Activated CD4-positive, alpha-beta T cell treated with anti-CD3 and anti-CD28 coated beads, Interleukin-2, amount 10 ng/mL, durations not matched to agents 24 days and 14 days (primary cell): ENCODE measurements at regions of chr2 and their contacts with region 1.

Region 1: GRCh38 chr2:62787386-62787785 is 81.9 kb downstream of the EHBP1 start:
- DNase-seq: no peak
- H3K4me3 Mint-ChIP-seq: no peak overlapping the region
- H3K27ac Mint-ChIP-seq: no peak overlapping the region
- H3K4me1 Mint-ChIP-seq: peaks cover 11% of the 10 kb centered on the region
- H3K27me3 Mint-ChIP-seq: no peaks in the 10 kb centered on the region

Region 2: GRCh38 chr2:63050334-63051041 is 263.1 kb after region 1 on chr2 and contains the start of gene OTX1:
- intact Hi-C with region 1: loop called (anchors 5 kb)
- DNase-seq: peak; percentile 83
- H3K4me3 Mint-ChIP-seq: peak within 1 kb of the TSS; percentile 80
- H3K27ac Mint-ChIP-seq: peak within 1 kb of the TSS; percentile 79
- H3K4me1 Mint-ChIP-seq: peaks cover 32% of the 10 kb centered on the region
- H3K27me3 Mint-ChIP-seq: peaks cover 87% of the 10 kb centered on the region
- total RNA-seq, gene OTX1: not detected in 2 replicates

Region 3: DNA sequence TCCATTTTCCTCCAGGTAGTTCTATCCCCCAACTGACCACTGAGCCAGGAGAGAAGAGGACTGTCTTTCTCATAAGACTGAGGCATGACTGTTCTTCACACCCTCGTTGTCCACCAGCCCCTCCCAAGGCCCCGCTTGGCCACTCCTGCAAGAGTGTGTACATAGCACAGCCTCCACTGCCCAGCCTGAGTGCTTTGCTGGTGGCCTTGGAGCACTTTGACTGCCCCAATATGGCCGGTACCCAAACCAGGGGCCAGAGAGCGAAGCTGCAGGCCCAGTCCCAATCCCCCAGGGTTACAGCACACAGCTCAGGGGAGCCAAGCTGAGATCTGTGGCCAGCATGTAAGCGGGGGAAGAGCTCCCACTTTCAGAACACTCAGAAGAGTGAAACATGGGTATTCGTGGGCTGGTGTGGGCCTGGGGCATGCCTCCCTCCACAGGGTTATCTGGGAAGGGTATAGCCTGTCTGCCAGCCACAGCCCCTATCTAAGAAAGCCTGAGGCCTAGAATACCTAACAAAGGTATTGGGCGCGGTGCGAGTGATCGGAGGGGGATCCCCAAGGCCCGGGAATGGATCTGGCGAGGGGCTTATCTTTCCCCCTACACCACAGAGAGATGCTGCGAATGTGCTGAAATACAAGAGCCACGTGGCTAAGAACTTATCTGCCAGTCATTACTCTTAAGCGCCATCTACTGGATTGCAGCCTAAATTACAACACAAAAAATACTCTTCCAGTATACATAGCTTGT is 637.1 kb after region 1 on chr2:
- intact Hi-C with region 1: loop called (anchors 1 kb)
- DNase-seq: peak; percentile 80
- H3K4me3 Mint-ChIP-seq: no peak overlapping the region
- H3K27ac Mint-ChIP-seq: no peak overlapping the region
- H3K4me1 Mint-ChIP-seq: peaks cover 2% of the 10 kb centered on the region
- H3K27me3 Mint-ChIP-seq: no peaks in the 10 kb centered on the region

Region 4: DNA sequence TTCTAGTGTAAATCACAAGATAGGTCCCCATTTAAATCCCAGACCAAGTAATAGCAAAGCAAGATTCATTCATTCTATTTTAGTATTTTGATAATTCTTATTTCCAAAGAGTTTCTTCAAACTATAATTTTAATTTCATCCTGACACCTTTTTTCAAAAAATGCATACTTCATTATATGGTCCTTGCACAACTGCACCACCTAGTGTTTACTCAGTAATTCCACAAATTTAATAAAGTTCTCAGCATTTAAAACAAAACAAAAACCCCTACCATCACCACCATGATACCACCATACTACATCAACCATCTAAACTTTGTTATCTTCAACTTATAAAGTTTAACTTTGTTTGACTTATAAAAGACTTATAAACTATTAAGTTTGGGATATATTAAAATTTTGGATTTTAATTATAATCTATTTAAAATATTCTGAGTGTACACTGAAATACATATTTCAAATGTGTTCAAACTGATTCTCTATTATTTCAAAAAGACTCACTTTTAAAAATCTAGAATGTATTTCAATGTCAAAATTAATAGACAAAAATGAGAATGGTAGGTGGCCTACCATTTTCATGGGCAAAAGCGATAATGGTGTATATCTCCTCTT is 756.7 kb after region 1 on chr2:
- intact Hi-C with region 1: loop called (anchors 5 kb)
- DNase-seq: no peak
- H3K4me3 Mint-ChIP-seq: no peak overlapping the region
- H3K27ac Mint-ChIP-seq: no peak overlapping the region
- H3K4me1 Mint-ChIP-seq: no peaks in the 10 kb centered on the region
- H3K27me3 Mint-ChIP-seq: no peaks in the 10 kb centered on the region